Endothelial cell of umbilical vein (primary cell): ENCODE measurements at regions of chr6 and their contacts with region 1.

Region 1: DNA sequence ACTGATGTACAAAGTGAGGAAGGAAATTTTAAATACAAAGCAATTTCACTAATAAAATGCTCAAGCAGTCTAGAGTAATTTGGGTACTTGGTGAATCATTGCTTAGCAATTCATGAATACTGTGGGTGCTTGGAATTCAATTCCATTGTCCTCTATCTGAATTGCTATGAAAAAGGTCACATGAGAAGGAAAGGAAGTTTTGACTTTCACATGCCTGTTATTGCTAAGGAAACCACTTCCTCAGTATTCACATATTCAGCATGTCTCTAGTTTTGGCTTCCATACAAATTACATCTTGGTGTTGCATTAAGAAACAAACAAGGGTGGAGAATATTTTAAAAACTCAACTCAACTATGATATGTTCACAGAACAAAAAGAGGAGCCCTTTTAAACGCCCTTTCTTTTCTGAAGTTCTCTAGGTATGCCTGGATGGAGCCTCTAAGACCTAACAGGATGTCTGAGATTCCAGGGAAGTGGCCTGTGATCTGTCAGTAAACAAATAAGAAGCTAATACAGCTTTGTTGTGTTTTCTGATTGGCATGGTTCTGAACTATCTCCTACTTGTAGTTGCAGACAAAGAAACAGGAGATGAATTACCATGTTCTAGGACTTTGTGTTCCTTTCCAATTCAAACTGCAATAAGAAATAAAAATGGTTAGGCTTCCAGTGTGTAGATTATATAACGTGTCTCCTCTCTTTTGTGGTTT is 190.4 kb downstream of the OGFRL1 start:
- DNase-seq: peak; percentile 95
- H3K4me3 ChIP-seq: peak overlapping the region in 1 of 3 experiments; percentile 31
- H3K27ac ChIP-seq: peak overlapping the region; percentile 98
- H3K4me1 ChIP-seq: peaks cover 38% of the 10 kb centered on the region
- H3K27me3 ChIP-seq: no peaks in the 10 kb centered on the region
- CTCF ChIP-seq: no peak
- POLR2A ChIP-seq: peak; percentile 34

Region 2: DNA sequence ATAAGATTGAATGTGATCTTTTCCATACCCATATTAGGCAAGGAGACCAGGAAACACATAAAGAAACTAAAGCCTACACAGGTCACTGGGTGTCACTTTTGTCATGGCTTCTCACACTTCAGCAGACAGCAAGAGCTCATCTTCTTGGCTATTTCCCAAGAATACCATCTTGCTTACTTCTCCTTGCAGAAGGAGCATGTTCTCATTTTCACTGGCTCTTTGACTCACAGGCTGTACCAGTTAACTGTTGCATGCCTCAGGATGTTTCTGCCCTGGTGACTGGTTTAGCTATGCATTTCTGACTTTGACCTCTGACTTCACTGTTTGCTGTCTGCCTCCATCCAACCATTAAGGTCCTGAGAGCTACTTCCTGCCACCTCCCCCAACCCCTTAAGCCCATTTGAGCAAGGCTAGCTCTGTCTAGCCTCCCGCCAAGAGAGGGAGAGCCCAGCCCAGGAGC is 230.7 kb before region 1 on chr6:
- CTCF ChIA-PET with region 1: no interaction called
- POLR2A ChIA-PET with region 1: no interaction called
- dilution Hi-C with region 1: no loop called
- intact Hi-C with region 1: loop called (anchors 1 kb)
- DNase-seq: peak; percentile 56
- H3K4me3 ChIP-seq: no peak overlapping the region
- H3K27ac ChIP-seq: peak overlapping the region; percentile 73
- H3K4me1 ChIP-seq: peaks cover 53% of the 10 kb centered on the region
- H3K27me3 ChIP-seq: no peaks in the 10 kb centered on the region
- CTCF ChIP-seq: no peak
- POLR2A ChIP-seq: no peak

Region 3: DNA sequence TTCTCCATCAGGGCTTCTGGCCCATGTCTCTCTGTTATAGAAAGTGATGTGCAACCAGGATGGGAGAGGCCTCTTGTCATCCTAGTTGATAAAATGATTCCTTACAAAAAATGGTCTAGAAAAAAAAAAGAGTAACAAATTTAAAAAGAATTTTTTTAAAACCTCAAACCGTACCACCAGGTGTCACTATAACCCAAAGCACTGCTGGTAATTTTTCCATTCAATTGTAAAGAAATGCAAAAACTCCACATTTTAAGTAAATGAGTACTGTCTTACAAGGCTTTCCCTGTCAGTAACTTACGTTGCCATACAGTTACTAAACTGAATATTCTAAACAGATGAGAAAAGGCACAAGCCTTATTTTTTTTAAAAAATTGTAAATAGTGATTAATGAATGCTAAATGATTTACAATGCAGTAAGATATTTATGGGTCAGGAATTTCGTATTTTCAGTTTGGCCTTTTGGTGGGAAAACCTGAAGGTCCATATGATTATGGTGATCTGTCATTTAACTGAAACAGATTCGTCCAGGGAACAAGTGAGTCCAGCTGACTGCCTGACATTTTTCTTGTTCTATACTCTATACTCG is 95.0 kb before region 1 on chr6:
- CTCF ChIA-PET with region 1: interaction called, 35 read pairs
- POLR2A ChIA-PET with region 1: interaction called, 3 read pairs
- dilution Hi-C with region 1: no loop called
- intact Hi-C with region 1: loop called (anchors 1 kb)
- DNase-seq: peak; percentile 84
- H3K4me3 ChIP-seq: no peak overlapping the region
- H3K27ac ChIP-seq: no peak overlapping the region
- H3K4me1 ChIP-seq: peaks cover 43% of the 10 kb centered on the region
- H3K27me3 ChIP-seq: no peaks in the 10 kb centered on the region
- CTCF ChIP-seq: peak; percentile 30 to 34
- POLR2A ChIP-seq: no peak

Region 4: GRCh38 chr6:71404145-71404966 is 74.6 kb before region 1 on chr6:
- CTCF ChIA-PET with region 1: interaction called, 11 read pairs
- POLR2A ChIA-PET with region 1: interaction called, 5 read pairs
- dilution Hi-C with region 1: no loop called
- intact Hi-C with region 1: loop called (anchors 1 kb)
- DNase-seq: peak; percentile 94
- H3K4me3 ChIP-seq: peak overlapping the region; percentile 22 to 83 (median 41)
- H3K27ac ChIP-seq: peak overlapping the region; percentile 95
- H3K4me1 ChIP-seq: peaks cover 89% of the 10 kb centered on the region
- H3K27me3 ChIP-seq: no peaks in the 10 kb centered on the region
- CTCF ChIP-seq: no peak
- POLR2A ChIP-seq: no peak

Region 5: GRCh38 chr6:71489747-71490315 is 10.8 kb after region 1 on chr6:
- CTCF ChIA-PET with region 1: interaction called, 11 read pairs
- POLR2A ChIA-PET with region 1: interaction called, 6 read pairs
- dilution Hi-C with region 1: no loop called
- intact Hi-C with region 1: loop called (anchors 1 kb)
- DNase-seq: peak; percentile 90
- H3K4me3 ChIP-seq: peak overlapping the region in 1 of 3 experiments; percentile 33
- H3K27ac ChIP-seq: peak overlapping the region; percentile 85
- H3K4me1 ChIP-seq: peaks cover 17% of the 10 kb centered on the region
- H3K27me3 ChIP-seq: no peaks in the 10 kb centered on the region
- CTCF ChIP-seq: no peak
- POLR2A ChIP-seq: no peak

Region 6: DNA sequence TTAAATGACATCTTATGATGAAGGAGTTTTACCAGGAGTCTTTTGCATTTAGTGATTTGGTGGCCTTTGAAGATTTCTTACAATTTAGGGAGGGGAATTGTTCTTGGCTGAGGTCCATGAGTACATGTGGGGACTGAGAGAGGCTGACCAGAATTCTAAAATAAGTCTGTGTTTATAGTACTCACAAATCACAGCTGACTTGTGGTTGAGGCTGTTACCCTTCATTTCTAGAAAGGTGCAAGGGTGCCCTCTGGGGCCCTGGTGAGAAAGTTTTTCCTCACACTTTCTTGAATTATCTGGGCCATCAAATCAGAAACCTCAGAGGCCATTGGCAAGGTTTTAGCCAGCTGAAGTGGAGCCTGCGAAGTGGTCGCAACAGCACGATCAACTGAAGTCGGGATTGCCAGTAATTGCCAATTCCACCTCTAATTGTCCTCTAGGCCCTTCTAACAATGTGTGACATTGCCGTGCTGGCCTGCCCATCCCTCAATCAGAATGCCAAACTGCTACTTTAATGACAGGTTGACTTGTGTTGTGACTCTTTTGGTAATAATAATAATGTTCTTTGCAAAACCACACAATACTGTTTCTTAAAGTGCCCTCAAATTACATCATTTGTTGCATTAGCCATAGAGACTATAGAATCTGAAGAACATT is 31.2 kb after region 1 on chr6:
- CTCF ChIA-PET with region 1: interaction called, 17 read pairs
- POLR2A ChIA-PET with region 1: no interaction called
- dilution Hi-C with region 1: no loop called
- intact Hi-C with region 1: loop called (anchors 1 kb)
- DNase-seq: peak; percentile 79
- H3K4me3 ChIP-seq: no peak overlapping the region
- H3K27ac ChIP-seq: no peak overlapping the region
- H3K4me1 ChIP-seq: peaks cover 7% of the 10 kb centered on the region
- H3K27me3 ChIP-seq: no peaks in the 10 kb centered on the region
- CTCF ChIP-seq: peak; percentile 57 to 59
- POLR2A ChIP-seq: no peak